CD4-positive, alpha-beta memory T cell (primary cell): ENCODE measurements at regions of chr17 and their contacts with region 1.

Region 1: DNA sequence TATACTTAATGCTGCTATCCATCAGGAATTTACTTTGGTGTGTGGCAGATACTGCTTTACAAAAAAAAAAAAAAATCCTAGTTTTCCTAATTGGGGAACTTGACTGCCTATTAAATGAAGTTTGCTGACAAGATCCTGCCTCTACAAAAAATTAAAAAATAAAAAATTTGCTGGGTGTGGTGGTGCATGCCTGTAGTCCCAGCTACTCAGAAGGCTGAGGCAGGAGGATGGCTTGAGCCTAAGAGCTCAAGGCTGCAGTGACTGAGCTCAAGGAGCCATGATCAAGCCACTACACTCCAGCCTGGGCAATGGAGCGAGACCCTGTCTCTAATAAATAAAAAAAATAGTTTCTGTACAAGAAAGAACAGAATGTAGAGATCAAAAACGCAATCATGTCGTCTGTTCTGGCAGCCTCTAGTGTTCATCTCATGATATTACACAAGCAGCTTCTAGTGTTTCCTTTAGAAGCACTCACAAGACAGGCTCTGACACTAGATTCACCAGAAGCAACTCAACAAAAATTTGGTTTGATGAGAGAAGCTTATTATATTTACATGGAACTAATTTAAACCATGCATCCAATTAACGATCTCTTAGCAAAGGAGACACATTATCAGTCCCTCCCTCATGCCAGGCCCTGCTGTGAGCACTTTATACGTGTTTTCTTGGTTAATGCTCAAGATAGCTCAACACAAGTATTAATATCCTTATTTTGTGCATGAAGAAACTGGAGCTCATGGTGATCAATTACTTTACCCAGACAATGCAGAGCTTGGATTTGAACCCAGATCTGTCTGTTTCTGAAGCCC is 6.8 kb upstream of the KRTAP17-1 start:
- DNase-seq: peak; percentile 39 to 65 (median 61)
- H3K4me3 ChIP-seq: no peak overlapping the region
- H3K4me3 Mint-ChIP-seq: peak overlapping the region in 1 of 8 donors; percentile 67
- H3K27ac ChIP-seq: no peak overlapping the region
- H3K27ac Mint-ChIP-seq: peak overlapping the region; percentile 85 to 92 (median 85)
- H3K4me1 ChIP-seq: peaks cover 52% of the 10 kb centered on the region
- H3K4me1 Mint-ChIP-seq: peaks cover 23 to 58% (median 45%) of the 10 kb centered on the region in 4 donors
- H3K27me3 ChIP-seq: no peaks in the 10 kb centered on the region
- H3K27me3 Mint-ChIP-seq: no peaks in the 10 kb centered on the region

Region 2: DNA sequence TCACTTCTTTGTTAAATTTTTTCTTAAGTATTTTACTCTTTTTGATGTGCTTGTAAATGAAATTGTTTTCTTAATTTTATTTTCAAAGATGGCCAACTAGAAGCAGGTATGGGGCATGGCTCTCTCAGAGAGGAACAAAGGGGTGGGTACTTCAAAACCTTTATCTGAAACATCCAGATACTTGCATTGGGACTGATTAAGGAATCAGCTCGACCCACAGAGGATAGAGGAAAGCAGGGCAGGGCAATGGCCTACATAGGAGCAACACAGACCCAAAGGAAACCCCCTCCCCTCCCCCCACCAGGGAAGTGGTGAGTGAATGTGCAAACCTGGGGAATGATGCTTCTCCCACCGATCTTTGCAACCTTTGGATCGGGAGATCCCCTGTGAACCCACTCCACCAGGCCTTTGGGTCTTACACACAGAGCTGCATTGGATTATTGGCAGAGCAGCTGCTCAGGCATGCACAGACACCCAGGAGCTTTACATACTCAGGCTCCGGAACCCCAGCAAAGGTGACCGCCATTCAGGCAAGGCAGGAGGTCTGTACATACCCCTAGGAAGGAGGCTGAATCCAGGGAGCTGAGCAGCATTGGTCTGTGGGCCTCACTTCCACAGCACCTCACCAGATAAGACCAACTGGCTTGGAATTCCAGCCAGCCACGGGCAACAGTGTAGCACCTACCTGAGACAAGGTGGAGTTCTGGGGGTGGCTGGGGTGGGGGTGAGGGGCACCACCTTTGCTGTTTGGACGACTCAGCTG is 754.0 kb before region 1 on chr17:
- CTCF ChIA-PET with region 1: no interaction called
- POLR2A ChIA-PET with region 1: no interaction called
- intact Hi-C with region 1: no loop called
- DNase-seq: no peak
- H3K4me3 ChIP-seq: no peak overlapping the region
- H3K4me3 Mint-ChIP-seq: peak overlapping the region in 2 of 8 donors; percentile 36 to 51
- H3K27ac ChIP-seq: no peak overlapping the region
- H3K27ac Mint-ChIP-seq: peak overlapping the region in 5 of 7 donors; percentile 29 to 81 (median 74)
- H3K4me1 ChIP-seq: peaks cover 42% of the 10 kb centered on the region
- H3K4me1 Mint-ChIP-seq: peaks cover 25 to 72% (median 49%) of the 10 kb centered on the region in 4 donors
- H3K27me3 ChIP-seq: no peaks in the 10 kb centered on the region
- H3K27me3 Mint-ChIP-seq: no peaks in the 10 kb centered on the region

Region 3: DNA sequence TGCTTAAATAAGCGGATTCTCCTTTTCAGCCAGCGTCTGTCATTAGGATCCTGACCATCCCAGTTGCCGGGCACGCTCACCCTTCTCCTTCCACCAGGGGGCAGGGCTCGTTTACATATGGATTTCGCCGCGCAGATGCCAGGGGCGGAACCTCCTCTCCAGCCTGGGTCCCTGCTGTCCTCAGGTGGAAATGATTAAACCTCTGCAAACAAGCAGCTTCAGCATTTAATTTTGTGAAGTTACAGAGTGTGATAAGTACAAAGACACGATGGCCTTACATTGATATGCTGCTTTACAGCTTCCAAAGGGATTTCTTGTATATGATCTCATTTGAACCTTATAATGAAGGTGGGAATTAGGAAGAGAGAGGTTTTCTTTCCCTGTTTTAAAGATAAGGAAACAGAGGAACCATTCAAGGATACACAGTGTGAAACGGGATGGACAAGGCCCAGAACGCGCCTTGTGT is 518.6 kb before region 1 on chr17:
- CTCF ChIA-PET with region 1: no interaction called
- POLR2A ChIA-PET with region 1: no interaction called
- intact Hi-C with region 1: loop called (anchors 5 kb)
- DNase-seq: peak; percentile 59 to 75 (median 62)
- H3K4me3 ChIP-seq: no peak overlapping the region
- H3K4me3 Mint-ChIP-seq: no peak overlapping the region
- H3K27ac ChIP-seq: no peak overlapping the region
- H3K27ac Mint-ChIP-seq: no peak overlapping the region
- H3K4me1 ChIP-seq: peaks cover 4% of the 10 kb centered on the region
- H3K4me1 Mint-ChIP-seq: peaks cover 2 to 4% (median 3%) of the 10 kb centered on the region in 4 donors
- H3K27me3 ChIP-seq: peaks cover 11% of the 10 kb centered on the region
- H3K27me3 Mint-ChIP-seq: peaks cover 19 to 34% of the 10 kb centered on the region in 2 donors

Region 4: DNA sequence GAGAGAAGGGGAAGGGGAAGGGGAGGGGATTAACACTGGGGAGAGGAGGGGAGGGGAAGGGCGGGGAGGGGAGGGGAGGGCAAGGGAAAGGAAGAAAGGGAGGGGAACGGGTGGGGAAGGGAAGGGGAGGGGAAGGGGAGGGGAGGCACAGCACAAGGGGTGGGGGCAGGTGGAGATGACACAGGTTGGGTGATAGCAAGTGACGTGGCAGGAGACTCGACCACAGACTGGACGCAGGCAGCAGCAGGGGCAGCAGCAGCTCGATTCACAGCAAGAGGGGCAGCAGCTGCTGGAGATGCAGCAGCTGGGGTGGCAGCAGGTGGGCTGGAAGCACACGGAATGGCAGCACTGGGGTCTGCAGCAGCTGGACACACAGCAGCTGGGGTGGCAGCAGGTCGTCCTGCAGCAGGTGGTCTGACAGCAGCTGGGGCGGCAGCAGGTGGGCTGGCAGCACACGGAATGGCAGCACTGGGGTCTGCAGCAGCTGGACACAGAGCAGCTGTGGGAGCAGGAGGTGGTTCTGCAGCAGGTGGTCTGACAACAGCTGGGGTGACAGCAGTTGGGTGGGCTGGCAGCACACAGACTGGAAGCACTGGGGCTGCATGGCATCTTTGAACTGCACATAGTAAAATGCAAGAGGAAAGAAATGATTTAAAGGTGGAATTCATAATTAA is 220.6 kb before region 1 on chr17 and contains the start of gene KRTAP4-16:
- CTCF ChIA-PET with region 1: no interaction called
- POLR2A ChIA-PET with region 1: no interaction called
- intact Hi-C with region 1: loop called (anchors 5 kb)
- DNase-seq: no peak
- H3K4me3 ChIP-seq: no peak within 1 kb of the TSS
- H3K4me3 Mint-ChIP-seq: no peak within 1 kb of the TSS
- H3K27ac ChIP-seq: no peak within 1 kb of the TSS
- H3K27ac Mint-ChIP-seq: peak within 1 kb of the TSS in 2 of 7 donors; percentile 28 to 59
- H3K4me1 ChIP-seq: no peaks in the 10 kb centered on the region
- H3K4me1 Mint-ChIP-seq: peaks cover 0 to 15% (median 5%) of the 10 kb centered on the region in 4 donors
- H3K27me3 ChIP-seq: no peaks in the 10 kb centered on the region
- H3K27me3 Mint-ChIP-seq: peaks cover 14 to 16% of the 10 kb centered on the region in 2 donors
- total RNA-seq, gene KRTAP4-16: not detected

Region 5: DNA sequence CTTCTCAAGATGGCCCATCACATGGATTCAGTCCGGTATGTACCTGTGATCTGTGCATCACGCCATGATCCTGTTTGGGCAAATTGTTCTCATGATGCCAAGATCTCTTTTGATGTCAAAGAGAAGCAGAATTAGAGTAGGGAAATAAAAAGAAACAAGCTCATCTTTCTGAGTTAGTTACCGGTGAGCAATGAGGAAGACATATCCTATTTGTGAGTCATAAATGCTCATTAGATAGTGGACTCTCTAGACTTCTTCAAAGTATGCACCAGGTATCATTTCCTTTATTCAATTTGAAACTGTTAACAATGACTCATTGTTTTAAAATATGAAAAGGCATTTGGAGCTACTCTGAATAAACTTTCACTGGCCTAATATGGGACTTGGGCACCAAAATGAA is 190.3 kb before region 1 on chr17:
- CTCF ChIA-PET with region 1: interaction called, 11 read pairs
- POLR2A ChIA-PET with region 1: interaction called, 3 read pairs
- intact Hi-C with region 1: no loop called
- DNase-seq: no peak
- H3K4me3 ChIP-seq: no peak overlapping the region
- H3K4me3 Mint-ChIP-seq: peak overlapping the region in 2 of 8 donors; percentile 14 to 19
- H3K27ac ChIP-seq: no peak overlapping the region
- H3K27ac Mint-ChIP-seq: peak overlapping the region in 2 of 7 donors; percentile 54 to 80
- H3K4me1 ChIP-seq: peaks cover 22% of the 10 kb centered on the region
- H3K4me1 Mint-ChIP-seq: peaks cover 0 to 66% (median 32%) of the 10 kb centered on the region in 4 donors
- H3K27me3 ChIP-seq: no peaks in the 10 kb centered on the region
- H3K27me3 Mint-ChIP-seq: no peaks in the 10 kb centered on the region

Region 6: DNA sequence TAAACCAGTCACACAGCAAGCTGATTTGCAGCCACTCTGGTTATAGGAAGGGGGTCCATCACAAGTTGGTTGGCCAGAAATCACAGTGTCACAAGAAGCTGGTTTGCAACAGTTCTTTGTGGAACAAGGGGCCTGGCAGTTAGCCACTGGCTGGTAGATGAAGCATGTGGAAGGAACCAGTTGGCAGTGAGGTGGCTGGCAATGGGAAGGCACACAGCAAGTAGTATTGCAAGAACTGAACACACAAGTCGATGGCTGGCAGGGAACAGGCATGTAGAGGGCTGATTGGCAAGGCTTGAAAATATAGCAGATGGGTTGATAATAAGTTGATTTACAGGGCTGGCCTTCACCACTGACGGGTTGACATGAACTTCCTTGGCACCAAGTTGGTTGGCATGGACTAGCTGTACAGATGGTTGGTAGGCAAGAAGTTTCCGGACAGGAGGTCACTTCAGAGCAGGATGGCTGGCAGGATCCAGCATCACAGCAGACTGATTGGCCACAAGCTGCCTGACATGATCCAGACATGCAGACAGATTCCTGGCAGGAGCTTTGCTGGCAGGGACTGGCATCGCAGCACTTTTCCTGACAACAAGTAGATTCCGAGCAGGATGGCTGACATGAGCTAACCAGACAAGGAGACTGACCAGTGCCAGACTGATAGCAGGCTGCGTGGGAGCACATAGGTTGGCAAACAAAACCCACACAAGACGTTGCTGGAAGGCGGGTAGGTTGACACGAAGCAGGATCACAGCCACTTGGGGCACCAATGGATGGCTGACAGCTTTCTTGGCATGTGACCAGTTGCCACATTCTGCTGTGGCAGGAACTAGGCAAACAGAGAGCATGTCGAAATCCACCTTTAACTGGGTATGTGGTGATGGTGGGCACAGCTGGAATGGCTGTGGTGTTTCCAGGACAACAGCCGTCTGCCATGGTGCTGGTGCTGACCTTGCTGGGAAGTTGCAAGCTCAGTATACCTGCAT is 20.1 kb before region 1 on chr17 and contains the start of gene KRTAP29-1:
- CTCF ChIA-PET with region 1: interaction called, 55 read pairs
- POLR2A ChIA-PET with region 1: interaction called, 59 read pairs
- intact Hi-C with region 1: no loop called
- DNase-seq: no peak
- H3K4me3 ChIP-seq: no peak within 1 kb of the TSS
- H3K4me3 Mint-ChIP-seq: peak within 1 kb of the TSS in 1 of 8 donors; percentile 7
- H3K27ac ChIP-seq: no peak within 1 kb of the TSS
- H3K27ac Mint-ChIP-seq: peak within 1 kb of the TSS in 2 of 7 donors; percentile 62 to 73
- H3K4me1 ChIP-seq: peaks cover 13% of the 10 kb centered on the region
- H3K4me1 Mint-ChIP-seq: peaks cover 17 to 28% (median 24%) of the 10 kb centered on the region in 4 donors
- H3K27me3 ChIP-seq: no peaks in the 10 kb centered on the region
- H3K27me3 Mint-ChIP-seq: no peaks in the 10 kb centered on the region
- total RNA-seq, gene KRTAP29-1: not detected

Region 7: GRCh38 chr17:41347869-41348773 is 25.8 kb after region 1 on chr17:
- CTCF ChIA-PET with region 1: interaction called, 48 read pairs
- POLR2A ChIA-PET with region 1: no interaction called
- intact Hi-C with region 1: no loop called
- DNase-seq: no peak
- H3K4me3 ChIP-seq: no peak overlapping the region
- H3K4me3 Mint-ChIP-seq: no peak overlapping the region
- H3K27ac ChIP-seq: no peak overlapping the region
- H3K27ac Mint-ChIP-seq: peak overlapping the region in 1 of 7 donors; percentile 44
- H3K4me1 ChIP-seq: peaks cover 18% of the 10 kb centered on the region
- H3K4me1 Mint-ChIP-seq: peaks cover 17 to 30% (median 21%) of the 10 kb centered on the region in 4 donors
- H3K27me3 ChIP-seq: no peaks in the 10 kb centered on the region
- H3K27me3 Mint-ChIP-seq: no peaks in the 10 kb centered on the region

Region 8: DNA sequence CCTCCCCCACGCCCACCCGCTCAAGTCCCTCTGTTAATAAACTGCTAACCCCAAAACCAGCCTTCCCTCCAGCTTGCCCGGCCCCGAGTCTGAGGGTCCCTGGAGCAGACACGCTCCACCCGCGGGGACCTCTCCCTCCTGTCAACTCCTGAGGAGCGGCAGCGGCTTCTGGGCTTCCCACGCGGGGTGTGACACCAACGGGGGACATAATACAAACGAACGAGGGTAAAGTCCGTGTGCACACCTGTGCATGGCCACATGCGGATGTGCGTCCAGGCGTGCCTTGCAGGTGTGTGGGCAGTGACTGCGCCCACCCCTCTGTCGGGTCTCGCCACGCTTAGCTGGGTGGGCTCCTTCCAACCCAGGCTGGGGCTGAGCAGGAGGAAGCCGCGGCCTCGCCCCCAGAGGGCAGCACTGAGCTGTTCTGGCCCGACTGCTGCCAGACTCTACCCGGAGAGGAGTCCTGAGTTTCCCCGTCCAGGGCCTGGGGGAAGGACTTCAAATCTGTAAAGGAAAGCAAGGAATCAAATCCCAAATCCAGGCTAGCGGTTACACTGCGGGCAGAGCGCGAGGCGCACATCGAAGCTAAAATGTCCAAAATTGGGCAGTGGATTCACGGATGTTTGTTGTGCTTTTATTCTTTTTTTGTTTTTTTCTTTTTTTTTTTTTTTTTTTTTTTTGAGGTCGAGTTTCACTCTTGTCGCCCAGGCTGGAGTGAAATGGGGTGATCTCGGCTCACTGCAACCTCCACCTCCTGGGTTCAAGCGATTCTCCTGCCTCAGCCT is 326.3 kb after region 1 on chr17:
- CTCF ChIA-PET with region 1: interaction called, 13 read pairs
- POLR2A ChIA-PET with region 1: no interaction called
- intact Hi-C with region 1: loop called (anchors 5 kb)
- DNase-seq: peak; percentile 75 to 84 (median 81)
- H3K4me3 ChIP-seq: peak overlapping the region; percentile 50 to 76
- H3K4me3 Mint-ChIP-seq: peak overlapping the region; percentile 74 to 91 (median 82)
- H3K27ac ChIP-seq: peak overlapping the region; percentile 49
- H3K27ac Mint-ChIP-seq: peak overlapping the region in 6 of 7 donors; percentile 64 to 92 (median 86)
- H3K4me1 ChIP-seq: peaks cover 13% of the 10 kb centered on the region
- H3K4me1 Mint-ChIP-seq: peaks cover 2 to 11% (median 8%) of the 10 kb centered on the region in 4 donors
- H3K27me3 ChIP-seq: no peaks in the 10 kb centered on the region
- H3K27me3 Mint-ChIP-seq: peaks cover 0 to 2% of the 10 kb centered on the region in 2 donors